CD14-positive monocyte (primary cell): ENCODE measurements at regions of chr2 and their contacts with region 1.

Region 1: DNA sequence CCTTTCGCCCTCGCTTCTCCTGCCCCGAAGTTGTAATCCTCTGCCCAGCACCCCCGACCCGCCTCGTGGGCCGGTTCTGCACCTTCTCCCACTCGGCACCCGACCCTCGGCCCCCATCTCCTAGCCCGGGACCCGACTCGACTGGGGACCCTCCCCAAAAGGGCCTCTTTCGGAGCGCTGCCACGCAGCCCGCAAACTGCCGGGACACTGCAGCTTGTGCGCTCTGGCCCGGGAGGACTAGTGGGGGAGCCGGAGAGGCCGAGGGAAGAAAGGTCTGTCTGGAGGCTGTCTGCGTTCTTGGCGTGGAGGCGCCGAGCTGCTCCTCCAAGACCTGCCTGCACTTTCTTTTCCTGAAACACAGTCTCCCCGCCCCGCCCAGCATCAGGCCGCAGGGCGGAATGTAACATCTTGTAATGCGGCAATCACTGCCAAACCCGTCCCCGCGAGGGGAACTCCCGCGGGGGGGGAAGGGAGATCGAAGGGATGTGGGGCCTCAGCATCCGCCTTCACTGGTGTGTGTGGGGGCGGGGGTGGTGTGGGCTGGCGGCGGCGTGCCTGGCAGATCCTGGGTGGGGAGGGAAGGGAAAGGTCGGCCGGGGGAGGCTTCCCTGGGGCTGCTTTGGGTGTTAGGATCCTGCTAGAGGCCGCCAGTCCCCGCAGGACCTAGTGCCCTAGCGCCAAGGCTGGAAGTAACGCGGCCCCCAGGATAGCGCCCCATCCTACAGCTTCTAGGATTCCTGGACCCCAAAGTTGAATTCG is 7.4 kb downstream of the DLX2 start:
- DNase-seq: peak; percentile 56 to 72 (median 58)
- H3K4me3 ChIP-seq: peak overlapping the region; percentile 48 to 88 (median 55)
- H3K4me3 Mint-ChIP-seq: peak overlapping the region; percentile 88 to 95
- H3K27ac ChIP-seq: no peak overlapping the region
- H3K27ac Mint-ChIP-seq: peak overlapping the region in 1 of 7 donors; percentile 26
- H3K4me1 ChIP-seq: peaks cover 54 to 66% of the 10 kb centered on the region in 2 donors
- H3K4me1 Mint-ChIP-seq: peaks cover 58% of the 10 kb centered on the region
- H3K27me3 ChIP-seq: peaks cover 90 to 99% of the 10 kb centered on the region in 2 donors
- H3K27me3 Mint-ChIP-seq: peaks cover 89 to 98% (median 97%) of the 10 kb centered on the region in 3 donors
- CTCF ChIP-seq: no peak

Region 2: GRCh38 chr2:172084734-172085459 is 10.4 kb before region 1 on chr2:
- intact Hi-C with region 1: loop called in 1 of 2 experiments (anchors 2 kb)
- DNase-seq: peak; percentile 88 to 93 (median 93)
- H3K4me3 ChIP-seq: peak overlapping the region; percentile 20 to 81 (median 53)
- H3K4me3 Mint-ChIP-seq: peak overlapping the region; percentile 82 to 91
- H3K27ac ChIP-seq: no peak overlapping the region
- H3K27ac Mint-ChIP-seq: peak overlapping the region in 1 of 7 donors; percentile 79
- H3K4me1 ChIP-seq: peaks cover 73 to 81% of the 10 kb centered on the region in 2 donors
- H3K4me1 Mint-ChIP-seq: peaks cover 81% of the 10 kb centered on the region
- H3K27me3 ChIP-seq: peaks cover 90 to 100% of the 10 kb centered on the region in 2 donors
- H3K27me3 Mint-ChIP-seq: peaks cover 96 to 100% (median 99%) of the 10 kb centered on the region in 3 donors
- CTCF ChIP-seq: no peak

Region 3: GRCh38 chr2:172131713-172132555 is 36.6 kb after region 1 on chr2:
- intact Hi-C with region 1: no loop called
- DNase-seq: no peak
- H3K4me3 ChIP-seq: no peak overlapping the region
- H3K4me3 Mint-ChIP-seq: no peak overlapping the region
- H3K27ac ChIP-seq: no peak overlapping the region
- H3K27ac Mint-ChIP-seq: peak overlapping the region in 1 of 7 donors; percentile 24
- H3K4me1 ChIP-seq: no peaks in the 10 kb centered on the region
- H3K4me1 Mint-ChIP-seq: no peaks in the 10 kb centered on the region
- H3K27me3 ChIP-seq: no peaks in the 10 kb centered on the region
- H3K27me3 Mint-ChIP-seq: peaks cover 1 to 2% (median 2%) of the 10 kb centered on the region in 3 donors
- CTCF ChIP-seq: no peak

Region 4: GRCh38 chr2:172147944-172148650 is 52.8 kb after region 1 on chr2:
- intact Hi-C with region 1: no loop called
- DNase-seq: no peak
- H3K4me3 ChIP-seq: no peak overlapping the region
- H3K4me3 Mint-ChIP-seq: no peak overlapping the region
- H3K27ac ChIP-seq: no peak overlapping the region
- H3K27ac Mint-ChIP-seq: no peak overlapping the region
- H3K4me1 ChIP-seq: no peaks in the 10 kb centered on the region
- H3K4me1 Mint-ChIP-seq: peaks cover 1% of the 10 kb centered on the region
- H3K27me3 ChIP-seq: no peaks in the 10 kb centered on the region
- H3K27me3 Mint-ChIP-seq: peaks cover 1 to 3% (median 1%) of the 10 kb centered on the region in 3 donors
- CTCF ChIP-seq: no peak